GM13977 (cell line): ENCODE measurements at regions of chr16 and their contacts with region 1.

Region 1: GRCh38 chr16:28879841-28880588 is 1.7 kb downstream of the ATP2A1 start:
- DNase-seq: peak; percentile 98
- CTCF ChIP-seq: no peak

Region 2: GRCh38 chr16:28943281-28943680 is 63.3 kb after region 1 on chr16:
- in situ Hi-C with region 1: loop called (anchors 10 kb)
- DNase-seq: no peak
- CTCF ChIP-seq: no peak